ENCODE measurements at regions of chr6 and their contacts with region 1.

Region 1: DNA sequence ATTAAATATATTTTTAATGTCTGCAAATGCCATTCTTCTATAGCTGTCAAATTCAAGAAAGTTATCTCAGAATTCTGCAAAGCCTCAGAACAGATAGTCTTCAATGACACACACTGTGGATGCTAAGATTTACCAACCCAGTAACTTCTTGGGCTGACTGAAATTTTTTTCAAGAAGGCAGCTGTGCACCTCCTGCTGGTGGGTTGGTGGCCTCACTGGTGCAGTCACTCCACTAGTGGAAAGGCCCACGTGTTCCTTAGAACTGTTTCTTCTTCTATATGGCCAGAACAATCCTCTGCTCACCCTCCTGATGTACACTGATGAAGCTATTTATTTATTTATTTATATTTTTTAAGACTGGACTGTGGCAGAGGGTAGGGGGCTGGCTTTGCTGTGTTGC is 28.1 kb upstream of the MTCL3 start:
- DNase-seq: peak; percentile 44
- H3K4me3 Mint-ChIP-seq: no peak overlapping the region
- H3K27ac Mint-ChIP-seq: no peak overlapping the region
- H3K4me1 Mint-ChIP-seq: peaks cover under 1% of the 10 kb centered on the region
- H3K27me3 Mint-ChIP-seq: peaks cover 4% of the 10 kb centered on the region

Region 2: GRCh38 chr6:127446356-127446755 is 100.9 kb before region 1 on chr6:
- CTCF ChIA-PET with region 1: no interaction called
- DNase-seq: no peak
- H3K4me3 Mint-ChIP-seq: no peak overlapping the region
- H3K27ac Mint-ChIP-seq: no peak overlapping the region
- H3K4me1 Mint-ChIP-seq: no peaks in the 10 kb centered on the region
- H3K27me3 Mint-ChIP-seq: no peaks in the 10 kb centered on the region

Region 3: DNA sequence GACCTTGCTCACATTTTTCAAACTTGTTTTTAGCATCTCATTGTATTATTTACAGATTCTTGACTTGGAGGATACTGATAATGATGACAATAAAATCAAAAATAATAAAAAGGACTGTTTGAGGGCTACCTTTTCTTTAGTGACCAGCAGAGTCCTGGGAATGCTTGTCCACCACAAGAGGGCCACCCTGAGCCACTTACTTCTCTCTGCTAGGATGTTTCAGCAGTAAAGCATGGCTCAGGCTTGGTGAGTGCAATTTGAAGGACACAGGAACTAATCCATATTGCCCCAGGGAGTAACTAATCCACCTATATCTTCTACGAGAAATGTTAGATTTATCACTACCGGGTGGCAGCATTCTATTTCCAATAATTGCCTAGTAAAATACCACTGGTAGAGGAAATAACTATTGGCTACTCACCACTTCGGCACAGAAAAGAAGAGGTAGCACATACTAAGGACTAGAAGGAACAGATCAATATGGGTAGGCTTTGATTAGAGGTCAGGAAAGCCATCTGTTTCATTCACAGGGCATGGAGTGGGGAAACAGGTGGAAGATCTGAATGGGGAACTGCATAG is 82.2 kb before region 1 on chr6:
- CTCF ChIA-PET with region 1: interaction called, 41 read pairs
- DNase-seq: peak; percentile 77
- H3K4me3 Mint-ChIP-seq: no peak overlapping the region
- H3K27ac Mint-ChIP-seq: no peak overlapping the region
- H3K4me1 Mint-ChIP-seq: peaks cover 13% of the 10 kb centered on the region
- H3K27me3 Mint-ChIP-seq: no peaks in the 10 kb centered on the region